HepG2 (cell line): ENCODE measurements at regions of chr22 and their contacts with region 1.

Region 1: DNA sequence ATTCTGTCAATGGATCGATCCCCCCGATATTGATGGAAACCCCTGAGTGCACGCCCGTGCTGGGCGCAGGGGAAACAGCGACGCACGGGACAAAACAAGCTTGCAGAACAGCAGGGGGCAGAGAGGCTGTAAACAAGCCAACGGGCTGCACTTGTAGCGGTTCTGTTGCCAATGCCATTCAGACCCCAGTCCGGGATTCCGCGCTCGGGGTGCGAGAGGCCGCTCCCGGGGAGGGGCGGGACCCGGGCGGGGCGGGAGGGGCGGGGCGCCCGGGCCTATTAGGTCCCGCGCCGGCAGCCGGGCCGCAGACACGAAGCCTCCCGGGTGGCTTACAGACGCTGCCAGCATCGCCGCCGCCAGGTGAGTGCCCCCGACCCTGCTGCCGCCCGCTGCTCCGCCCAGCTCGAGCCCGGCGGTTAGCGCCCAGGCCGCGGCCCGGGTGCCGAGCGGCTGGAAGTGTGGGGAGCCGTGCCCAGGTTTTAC is at the start of gene BIK:
- DNase-seq: peak; percentile 51
- ATAC-seq: peak; percentile 75
- H3K4me3 ChIP-seq: peak within 1 kb of the TSS; percentile 60 to 74 (median 62); a peak in 5 of 6 replicates
- H3K27ac ChIP-seq: no peak within 1 kb of the TSS
- H3K4me1 ChIP-seq: peaks cover 50% of the 10 kb centered on the region
- H3K27me3 ChIP-seq: peaks cover 5 to 36% of the 10 kb centered on the region in 2 experiments; a peak in 4 of 5 replicates
- CTCF ChIP-seq: peak; percentile 60
- EP300 ChIP-seq: no peak
- POLR2A ChIP-seq: no peak
- RAD21 ChIP-seq: no peak
- total RNA-seq, gene BIK: 0.66 and 0.80 TPM in 2 replicates

Region 2: GRCh38 chr22:43126480-43127165 is 16.1 kb after region 1 on chr22:
- CTCF ChIA-PET with region 1: no interaction called
- POLR2A ChIA-PET with region 1: interaction called, 13 read pairs
- in situ Hi-C with region 1: no loop called
- intact Hi-C with region 1: loop called (anchors 2 kb)
- DNase-seq: peak; percentile 65
- ATAC-seq: peak; percentile 79
- H3K4me3 ChIP-seq: peak overlapping the region in 1 of 3 experiments; percentile 57; a peak in 2 of 6 replicates
- H3K27ac ChIP-seq: no peak overlapping the region
- H3K4me1 ChIP-seq: peaks cover 31% of the 10 kb centered on the region
- H3K27me3 ChIP-seq: no peaks in the 10 kb centered on the region
- CTCF ChIP-seq: no peak
- EP300 ChIP-seq: no peak
- POLR2A ChIP-seq: no peak
- RAD21 ChIP-seq: no peak

Region 3: GRCh38 chr22:43142880-43143562 is 32.5 kb after region 1 on chr22 and contains the start of gene MCAT:
- CTCF ChIA-PET with region 1: no interaction called
- POLR2A ChIA-PET with region 1: no interaction called
- in situ Hi-C with region 1: no loop called
- intact Hi-C with region 1: loop called (anchors 5 kb)
- DNase-seq: peak; percentile 61
- ATAC-seq: peak; percentile 95
- H3K4me3 ChIP-seq: peak within 1 kb of the TSS; percentile 79 to 85 (median 85)
- H3K27ac ChIP-seq: peak within 1 kb of the TSS; percentile 62
- H3K4me1 ChIP-seq: peaks cover 22% of the 10 kb centered on the region
- H3K27me3 ChIP-seq: peaks cover 2 to 3% of the 10 kb centered on the region in 2 experiments; a peak in 3 of 5 replicates
- CTCF ChIP-seq: no peak
- EP300 ChIP-seq: peak in 1 of 2 experiments; percentile 22; a peak in 1 of 4 replicates
- POLR2A ChIP-seq: peak; percentile 50 to 60; a peak in 3 of 4 replicates
- RAD21 ChIP-seq: no peak
- total RNA-seq, gene MCAT: 16.7 and 19.3 TPM in 2 replicates

Region 4: GRCh38 chr22:43154887-43155536 is 44.5 kb after region 1 on chr22:
- CTCF ChIA-PET with region 1: no interaction called
- POLR2A ChIA-PET with region 1: no interaction called
- in situ Hi-C with region 1: no loop called
- intact Hi-C with region 1: no loop called
- DNase-seq: no peak
- ATAC-seq: no peak
- H3K4me3 ChIP-seq: no peak overlapping the region
- H3K27ac ChIP-seq: no peak overlapping the region
- H3K4me1 ChIP-seq: peaks cover 39% of the 10 kb centered on the region
- H3K27me3 ChIP-seq: peaks cover 6 to 29% of the 10 kb centered on the region in 2 experiments; a peak in 4 of 5 replicates
- CTCF ChIP-seq: no peak
- EP300 ChIP-seq: no peak
- POLR2A ChIP-seq: no peak
- RAD21 ChIP-seq: no peak